AG04449 (cell line): ENCODE measurements at regions of chr21 and their contacts with region 1.

Region 1: DNA sequence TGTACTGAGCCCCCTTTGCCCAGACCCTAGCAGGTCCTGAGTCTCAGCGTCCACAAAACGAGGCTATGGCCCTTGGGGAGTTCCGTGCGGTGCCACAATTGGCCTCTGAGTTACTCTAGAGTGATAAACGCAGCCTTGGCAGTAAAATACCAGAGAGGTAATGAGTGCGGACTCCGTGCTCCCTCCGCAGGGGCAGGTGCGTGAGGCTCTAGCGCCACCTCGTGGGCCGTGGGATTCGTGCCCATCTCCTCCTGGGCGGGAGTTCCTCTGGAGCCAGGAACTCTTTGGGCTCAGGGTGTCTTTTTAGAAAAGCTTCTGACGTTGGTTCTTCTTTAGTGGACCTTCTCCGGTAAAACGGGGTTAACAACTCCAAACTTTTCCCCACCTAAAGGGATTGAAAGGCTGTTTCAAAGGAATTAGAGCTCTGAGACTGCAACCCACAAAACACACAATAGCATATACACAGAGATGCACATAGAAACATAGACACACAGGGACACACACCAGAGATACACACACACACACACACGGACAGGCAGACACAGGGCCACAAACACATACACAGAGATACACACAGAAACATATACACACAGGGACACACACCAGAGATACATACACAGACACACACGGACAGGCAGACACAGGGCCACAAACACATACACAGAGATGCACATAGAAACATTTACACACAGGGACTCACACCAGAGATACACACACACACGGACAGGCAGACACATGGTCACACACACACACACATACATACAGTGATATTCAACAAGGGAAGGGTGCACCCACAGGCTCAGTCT is 99.4 kb downstream of the KCNJ15 start:
- DNase-seq: no peak
- H3K4me3 ChIP-seq: no peak overlapping the region
- CTCF ChIP-seq: peak; percentile 98

Region 2: DNA sequence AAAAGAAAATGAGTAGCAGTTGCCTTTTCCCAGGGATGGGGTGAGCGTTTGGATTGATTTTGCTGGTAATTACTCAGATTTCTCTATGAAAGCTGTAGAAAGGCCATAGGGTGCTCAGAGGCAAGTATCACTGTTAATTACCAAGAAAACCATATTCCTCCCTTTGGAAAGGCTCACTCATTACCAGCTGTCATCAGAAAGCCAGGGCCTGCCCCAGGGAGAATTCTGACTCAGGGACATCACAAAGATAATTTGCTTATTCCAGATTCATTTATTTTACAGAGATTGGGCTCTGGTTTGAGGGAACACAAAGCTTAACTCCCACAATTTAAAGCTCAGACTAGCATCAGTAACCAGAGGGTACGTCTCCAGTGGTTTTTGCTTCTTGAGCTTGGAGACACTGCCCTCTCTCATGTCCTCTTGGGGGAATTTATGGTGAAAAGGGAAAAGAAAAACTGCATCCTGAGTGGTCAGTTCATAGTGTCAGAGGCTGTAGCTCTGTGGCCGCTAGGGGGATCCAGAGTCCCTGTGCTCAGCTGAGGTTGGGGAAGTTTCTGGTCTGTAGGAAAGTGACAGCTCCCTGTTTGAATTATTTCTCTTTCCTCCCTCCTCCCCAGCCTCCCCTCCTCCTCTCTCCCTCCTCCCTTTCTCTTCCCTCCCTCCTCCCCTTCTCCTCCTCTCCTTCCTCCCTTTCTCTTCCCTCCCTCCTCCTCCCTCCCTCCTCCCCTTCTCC is 644.2 kb before region 1 on chr21:
- CTCF ChIA-PET with region 1: interaction called, 38 read pairs
- POLR2A ChIA-PET with region 1: no interaction called
- DNase-seq: no peak
- H3K4me3 ChIP-seq: no peak overlapping the region
- CTCF ChIP-seq: peak; percentile 90

Region 3: GRCh38 chr21:38140210-38140907 is 215.8 kb before region 1 on chr21:
- CTCF ChIA-PET with region 1: interaction called, 13 read pairs
- POLR2A ChIA-PET with region 1: no interaction called
- DNase-seq: no peak
- H3K4me3 ChIP-seq: no peak overlapping the region
- CTCF ChIP-seq: no peak

Region 4: GRCh38 chr21:38170280-38170679 is 185.9 kb before region 1 on chr21:
- CTCF ChIA-PET with region 1: interaction called, 459 read pairs
- POLR2A ChIA-PET with region 1: interaction called, 6 read pairs
- DNase-seq: no peak
- H3K4me3 ChIP-seq: no peak overlapping the region
- CTCF ChIP-seq: peak; percentile 49

Region 5: DNA sequence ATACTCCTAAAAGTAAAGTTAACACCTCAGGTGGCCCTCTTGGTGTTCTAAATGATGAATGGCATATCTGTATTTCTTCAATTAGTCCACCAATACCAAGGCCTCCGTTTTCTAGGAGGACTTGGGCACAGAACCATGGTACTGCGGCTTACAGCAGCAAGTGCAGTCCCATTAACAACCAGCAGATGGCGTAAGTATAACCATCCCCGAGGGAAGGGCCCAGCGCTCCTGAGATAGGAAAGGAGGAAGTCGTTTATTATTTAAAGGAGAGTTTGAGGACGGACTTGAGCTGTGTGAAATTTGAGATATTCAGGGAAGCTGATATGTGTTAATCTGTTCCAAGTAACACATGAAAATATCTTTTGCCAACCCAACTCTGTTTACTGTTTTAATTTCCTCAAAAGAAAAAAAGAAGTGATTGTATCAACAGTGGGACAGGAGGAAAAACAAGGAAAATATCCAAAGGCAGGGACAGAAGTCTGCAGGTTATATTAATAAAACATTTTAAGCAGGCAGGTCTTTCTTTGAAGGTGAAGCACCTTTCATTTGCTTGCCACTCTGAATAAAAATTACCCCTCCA is 137.1 kb before region 1 on chr21:
- CTCF ChIA-PET with region 1: interaction called, 388 read pairs
- POLR2A ChIA-PET with region 1: no interaction called
- DNase-seq: peak; percentile 5
- H3K4me3 ChIP-seq: no peak overlapping the region
- CTCF ChIP-seq: peak; percentile 90

Region 6: GRCh38 chr21:38297194-38297631 is 59.0 kb before region 1 on chr21:
- CTCF ChIA-PET with region 1: interaction called, 11 read pairs
- POLR2A ChIA-PET with region 1: no interaction called
- DNase-seq: peak; percentile 46
- H3K4me3 ChIP-seq: no peak overlapping the region
- CTCF ChIP-seq: no peak

Region 7: GRCh38 chr21:38478782-38479181 is 122.6 kb after region 1 on chr21:
- CTCF ChIA-PET with region 1: no interaction called
- POLR2A ChIA-PET with region 1: no interaction called
- DNase-seq: no peak
- H3K4me3 ChIP-seq: no peak overlapping the region
- CTCF ChIP-seq: no peak